ENCODE measurements at regions of chr22 and their contacts with region 1.

Region 1: GRCh38 chr22:37658133-37659065 is at the start of gene PDXP:
- DNase-seq: peak; percentile 100
- H3K4me3 ChIP-seq: peak within 1 kb of the TSS; percentile 18 to 85 (median 54)
- H3K27ac ChIP-seq: peak within 1 kb of the TSS; percentile 7
- H3K4me1 ChIP-seq: peaks cover 17% of the 10 kb centered on the region
- H3K27me3 ChIP-seq: no peaks in the 10 kb centered on the region
- CTCF ChIP-seq: no peak
- POLR2A ChIP-seq: peak; percentile 73
- total RNA-seq, gene PDXP: 14.8 and 18.0 TPM in 2 replicates

Region 2: DNA sequence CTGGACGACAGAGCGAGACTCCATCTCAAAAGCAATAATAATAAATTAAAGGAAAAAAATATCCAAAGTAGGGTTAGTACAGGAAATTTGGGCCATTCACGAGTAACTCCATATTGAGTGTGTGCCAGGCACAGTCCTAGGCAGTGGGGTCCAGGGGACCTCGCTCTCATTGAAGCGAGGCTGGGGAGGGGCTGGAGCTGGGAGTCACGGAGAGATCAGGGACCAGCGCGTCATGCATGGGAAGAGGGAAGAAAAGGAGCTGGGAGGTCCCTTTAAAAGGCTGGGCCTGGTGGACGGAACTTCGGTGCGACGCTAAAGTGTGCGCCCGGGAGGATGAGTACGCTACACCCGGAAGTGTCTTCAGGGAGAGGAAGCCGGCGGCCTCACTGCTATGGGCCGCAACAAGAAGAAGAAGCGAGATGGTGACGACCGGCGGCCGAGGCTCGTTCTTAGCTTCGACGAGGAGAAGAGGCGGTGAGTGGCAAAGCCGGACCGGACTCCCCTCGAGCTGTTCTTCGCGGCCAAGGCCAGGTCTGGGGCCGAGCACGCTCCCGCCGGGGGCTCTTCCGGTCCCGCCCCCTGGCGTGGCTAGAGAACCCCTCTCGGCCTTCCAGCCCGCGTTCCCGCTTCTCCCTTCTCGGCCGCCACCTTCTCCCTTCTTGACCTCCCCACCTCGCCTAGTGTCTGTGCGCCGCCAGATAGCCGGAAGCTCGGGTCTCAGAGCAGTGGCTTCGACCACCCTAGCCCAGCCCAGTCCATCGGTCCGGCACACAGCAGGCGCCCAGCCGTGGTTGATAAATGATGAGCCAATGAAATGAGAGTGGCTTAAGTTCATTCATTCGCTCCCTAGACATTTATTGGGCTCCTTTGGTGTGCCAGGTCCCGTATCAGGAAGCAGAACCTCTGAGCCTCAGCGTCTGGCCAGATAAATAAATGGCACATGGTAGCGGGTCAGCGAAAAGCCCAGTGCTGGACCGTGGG is 27.9 kb after region 1 on chr22 and contains the start of gene NOL12:
- CTCF ChIA-PET with region 1: interaction called, 220 read pairs
- POLR2A ChIA-PET with region 1: interaction called, 7 read pairs
- dilution Hi-C with region 1: no loop called
- intact Hi-C with region 1: loop called (anchors 1 kb)
- DNase-seq: peak; percentile 92
- H3K4me3 ChIP-seq: peak within 1 kb of the TSS; percentile 44 to 99 (median 82)
- H3K27ac ChIP-seq: peak within 1 kb of the TSS; percentile 74
- H3K4me1 ChIP-seq: peaks cover 5% of the 10 kb centered on the region
- H3K27me3 ChIP-seq: no peaks in the 10 kb centered on the region
- CTCF ChIP-seq: no peak
- POLR2A ChIP-seq: peak; percentile 90
- total RNA-seq, gene NOL12: 29.1 and 31.5 TPM in 2 replicates

Region 3: GRCh38 chr22:37696657-37697537 is 38.5 kb after region 1 on chr22 and contains the start of gene TRIOBP:
- CTCF ChIA-PET with region 1: interaction called, 6 read pairs
- POLR2A ChIA-PET with region 1: no interaction called
- dilution Hi-C with region 1: no loop called
- intact Hi-C with region 1: loop called (anchors 1 kb)
- DNase-seq: peak; percentile 96
- H3K4me3 ChIP-seq: no peak within 1 kb of the TSS
- H3K27ac ChIP-seq: no peak within 1 kb of the TSS
- H3K4me1 ChIP-seq: peaks cover 11% of the 10 kb centered on the region
- H3K27me3 ChIP-seq: no peaks in the 10 kb centered on the region
- CTCF ChIP-seq: peak; percentile 56 to 78
- POLR2A ChIP-seq: no peak
- total RNA-seq, gene TRIOBP: 104 TPM in 2 replicates

Region 4: GRCh38 chr22:37781479-37781911 is 123.1 kb after region 1 on chr22:
- CTCF ChIA-PET with region 1: interaction called, 12 read pairs
- POLR2A ChIA-PET with region 1: no interaction called
- dilution Hi-C with region 1: no loop called
- intact Hi-C with region 1: no loop called
- DNase-seq: no peak
- H3K4me3 ChIP-seq: no peak overlapping the region
- H3K27ac ChIP-seq: no peak overlapping the region
- H3K4me1 ChIP-seq: peaks cover 15% of the 10 kb centered on the region
- H3K27me3 ChIP-seq: no peaks in the 10 kb centered on the region
- CTCF ChIP-seq: peak; percentile 21 to 41
- POLR2A ChIP-seq: no peak